SK-N-SH (cell line): ENCODE measurements at regions of chr15 and their contacts with region 1.

Region 1: DNA sequence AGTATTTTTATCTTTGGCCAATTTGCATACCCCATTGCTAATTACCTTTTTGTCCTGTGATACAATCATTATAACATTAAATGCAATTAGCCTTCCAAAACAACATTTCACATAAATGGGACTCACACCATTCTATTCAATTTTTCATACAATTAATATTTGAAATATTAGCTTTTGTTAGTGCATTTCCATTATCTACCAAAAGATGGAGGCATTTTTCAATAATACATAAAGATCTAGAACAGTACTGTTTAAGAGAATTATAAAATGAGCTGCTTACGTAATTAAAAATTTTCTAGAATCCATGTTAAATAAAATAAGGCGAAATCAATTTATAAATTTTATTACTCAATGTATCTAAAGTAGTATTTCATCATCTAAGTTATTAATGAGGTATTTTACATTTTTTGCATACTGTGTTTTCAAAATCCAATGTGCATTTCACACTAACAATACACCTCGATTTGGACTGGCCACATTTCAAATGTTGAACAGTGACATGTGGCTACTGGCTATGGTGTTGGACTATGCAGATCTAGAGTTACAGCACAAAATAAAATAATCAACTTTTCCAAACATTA is 74.3 kb downstream of the TJP1 start:
- DNase-seq: peak; percentile 17
- H3K4me3 ChIP-seq: no peak overlapping the region
- H3K27ac ChIP-seq: no peak overlapping the region
- H3K4me1 ChIP-seq: no peaks in the 10 kb centered on the region; a peak in 1 of 4 replicates
- H3K27me3 ChIP-seq: no peaks in the 10 kb centered on the region
- CTCF ChIP-seq: peak; percentile 77
- EP300 ChIP-seq: no peak
- RAD21 ChIP-seq: peak; percentile 61

Region 2: GRCh38 chr15:30068326-30068725 is 320.4 kb after region 1 on chr15:
- CTCF ChIA-PET with region 1: interaction called, 27 read pairs
- POLR2A ChIA-PET with region 1: no interaction called
- DNase-seq: no peak
- H3K4me3 ChIP-seq: no peak overlapping the region
- H3K27ac ChIP-seq: no peak overlapping the region
- H3K4me1 ChIP-seq: no peaks in the 10 kb centered on the region
- H3K27me3 ChIP-seq: no peaks in the 10 kb centered on the region; the same call in 1 of the 2 replicates
- CTCF ChIP-seq: no peak
- EP300 ChIP-seq: no peak
- RAD21 ChIP-seq: no peak